Activated CD8-positive, alpha-beta T cell treated with anti-CD3 and anti-CD28 coated beads, Interleukin-2, amount 10 ng/mL, durations not matched to agents 7 days and 5 days (primary cell): ENCODE measurements at regions of chr20 and their contacts with region 1.

Region 1: GRCh38 chr20:23415959-23416583 is 5.2 kb downstream of the NAPB start:
- DNase-seq: no peak
- ATAC-seq: no peak
- H3K4me3 Mint-ChIP-seq: no peak overlapping the region
- H3K27ac Mint-ChIP-seq: no peak overlapping the region
- H3K4me1 Mint-ChIP-seq: peaks cover 60% of the 10 kb centered on the region
- H3K27me3 Mint-ChIP-seq: no peaks in the 10 kb centered on the region

Region 2: DNA sequence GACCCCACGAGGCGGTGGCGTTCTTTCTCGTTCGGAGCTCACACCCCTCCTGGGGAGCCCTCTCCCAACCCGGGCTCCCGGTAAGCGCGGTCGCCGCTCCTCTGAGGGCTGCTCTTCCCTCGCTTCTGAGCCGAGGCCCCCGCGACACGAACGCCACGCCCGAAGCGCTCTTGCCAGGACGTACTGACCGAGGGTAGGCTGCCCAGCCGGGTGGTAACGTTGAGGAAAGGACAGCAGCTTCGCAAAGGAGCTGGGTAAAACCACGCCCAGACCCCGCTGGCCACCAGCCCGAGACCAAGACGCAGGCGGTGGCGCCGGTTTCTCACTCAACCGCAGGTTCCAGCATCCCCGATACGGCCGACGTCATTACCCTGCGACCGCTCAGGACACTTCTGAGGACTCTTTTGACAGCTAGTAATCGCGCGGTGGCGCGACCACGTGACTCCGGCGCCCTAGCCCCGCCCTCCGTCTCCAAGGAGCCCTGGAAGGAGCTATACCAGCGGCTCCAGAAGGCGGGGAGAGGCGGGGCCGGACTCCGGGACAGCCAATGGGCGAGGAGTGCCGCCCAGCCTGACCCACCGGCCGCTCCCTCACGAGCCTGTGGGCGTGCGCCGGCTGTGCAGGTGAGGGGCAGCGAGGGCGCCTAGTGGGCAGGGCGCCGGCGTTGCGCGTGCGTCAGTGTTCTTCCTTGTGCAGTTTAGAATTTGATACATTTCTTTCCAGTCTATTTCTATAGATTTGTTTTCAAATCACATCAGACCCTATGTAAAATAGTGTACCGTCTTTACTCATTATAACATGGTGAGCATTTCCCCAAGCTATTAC is 58.1 kb before region 1 on chr20:
- CTCF ChIA-PET with region 1: interaction called, 22 read pairs
- POLR2A ChIA-PET with region 1: interaction called, 11 read pairs
- DNase-seq: peak; percentile 100
- ATAC-seq: peak; percentile 83
- H3K4me3 Mint-ChIP-seq: peak overlapping the region; percentile 92
- H3K27ac Mint-ChIP-seq: peak overlapping the region; percentile 98
- H3K4me1 Mint-ChIP-seq: peaks cover 40% of the 10 kb centered on the region
- H3K27me3 Mint-ChIP-seq: no peaks in the 10 kb centered on the region